ENCODE measurements at regions of chrX and their contacts with region 1.

Region 1: GRCh38 chrX:111869639-111870034 is 6.3 kb upstream of the TRPC5OS start:
- DNase-seq: peak in 2 of 5 donors; percentile 9 to 16
- ATAC-seq: peak in 3 of 4 donors; percentile 68 to 86 (median 82)
- H3K4me3 ChIP-seq: no peak overlapping the region
- H3K27ac ChIP-seq: no peak overlapping the region
- H3K4me1 ChIP-seq: peaks cover 0 to 7% (median 0%) of the 10 kb centered on the region in 12 donors
- H3K27me3 ChIP-seq: peaks cover 0 to 47% (median 0%) of the 10 kb centered on the region in 9 donors
- CTCF ChIP-seq: peak; percentile 35 to 76 (median 62)
- POLR2A ChIP-seq: no peak

Region 2: DNA sequence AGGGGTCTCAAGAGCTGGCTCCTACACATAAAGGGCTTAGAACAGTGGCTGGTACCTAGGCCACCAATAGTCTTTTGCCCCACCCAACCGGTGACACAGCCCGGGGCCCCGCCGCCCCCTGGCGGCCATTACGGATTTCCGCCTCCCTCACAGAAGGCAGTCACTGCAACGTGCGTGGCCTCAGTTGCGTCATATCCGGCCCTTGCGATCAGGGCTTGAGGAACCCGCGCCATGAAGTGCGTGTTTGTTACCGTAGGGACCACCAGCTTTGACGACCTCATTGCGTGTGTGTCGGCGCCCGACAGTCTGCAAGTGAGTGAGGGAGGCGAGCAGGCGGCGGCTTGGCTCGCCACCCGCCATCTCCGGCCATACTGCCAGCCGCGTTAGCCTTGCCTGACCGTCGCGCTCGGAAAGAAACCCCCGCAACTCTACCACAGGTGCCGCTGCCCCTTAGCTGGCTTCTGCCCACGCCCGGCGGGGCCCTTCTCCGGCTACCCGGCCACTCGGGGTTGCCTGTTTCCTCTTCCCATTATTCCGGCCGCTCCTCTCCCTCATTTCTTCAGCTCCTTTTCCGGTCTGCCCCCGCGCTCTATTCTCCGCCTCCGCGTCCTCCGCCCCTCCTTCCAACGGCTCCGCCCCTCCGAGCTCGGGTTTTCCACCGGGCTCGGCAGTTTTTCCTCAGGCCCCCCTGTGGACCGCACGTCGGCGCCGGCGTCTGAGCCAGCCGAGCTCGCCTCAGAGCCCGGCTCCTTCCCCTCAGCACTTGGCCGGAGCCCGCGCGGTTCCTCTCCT is 188.5 kb before region 1 on chrX and contains the start of gene ALG13:
- intact Hi-C with region 1: no loop called
- DNase-seq: peak; percentile 88 to 92 (median 92)
- ATAC-seq: peak; percentile 95 to 97 (median 96)
- H3K4me3 ChIP-seq: peak within 1 kb of the TSS; percentile 49 to 93 (median 75)
- H3K27ac ChIP-seq: peak within 1 kb of the TSS; percentile 93 to 100 (median 98)
- H3K4me1 ChIP-seq: peaks cover 0 to 16% (median 2%) of the 10 kb centered on the region in 12 donors
- H3K27me3 ChIP-seq: peaks cover 0 to 6% (median 0%) of the 10 kb centered on the region in 9 donors
- CTCF ChIP-seq: peak; percentile 49 to 82 (median 68)
- POLR2A ChIP-seq: peak in 1 of 2 donors; percentile 42
- total RNA-seq, gene ALG13: 20.5 to 39.7 (median 25.3) TPM

Region 3: GRCh38 chrX:112043997-112044396 is 174.4 kb after region 1 on chrX:
- intact Hi-C with region 1: loop called in 2 of 10 experiments (anchors 5 to 10 kb)
- DNase-seq: no peak
- ATAC-seq: no peak
- H3K4me3 ChIP-seq: no peak overlapping the region
- H3K27ac ChIP-seq: no peak overlapping the region
- H3K4me1 ChIP-seq: no peaks in the 10 kb centered on the region
- H3K27me3 ChIP-seq: peaks cover 0 to 38% (median 0%) of the 10 kb centered on the region in 9 donors
- CTCF ChIP-seq: peak in 4 of 12 donors; percentile 8 to 22 (median 14)
- POLR2A ChIP-seq: no peak

Region 4: DNA sequence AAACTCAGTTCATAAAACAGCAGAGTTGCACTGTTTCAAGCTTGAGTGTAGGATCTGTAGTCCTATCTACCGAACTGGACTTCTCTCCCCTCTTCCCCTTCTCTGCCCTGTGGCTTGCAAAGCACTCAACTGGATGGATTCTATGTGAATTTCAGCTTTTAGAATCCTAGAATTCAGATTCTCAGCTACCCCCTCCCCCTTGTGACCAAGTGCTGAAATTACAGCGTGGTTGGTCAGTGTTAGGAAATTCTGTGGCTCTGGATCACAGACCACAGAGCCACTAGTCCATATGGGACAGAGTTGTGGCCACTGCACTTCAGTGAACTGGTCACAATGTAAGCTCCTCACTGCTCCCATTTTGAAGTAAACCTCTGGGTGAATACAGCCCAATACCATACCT is 277.6 kb after region 1 on chrX:
- intact Hi-C with region 1: loop called in 5 of 10 experiments (anchors 5 to 10 kb)
- DNase-seq: no peak
- ATAC-seq: no peak
- H3K4me3 ChIP-seq: no peak overlapping the region
- H3K27ac ChIP-seq: no peak overlapping the region
- H3K4me1 ChIP-seq: no peaks in the 10 kb centered on the region
- H3K27me3 ChIP-seq: peaks cover 0 to 28% (median 0%) of the 10 kb centered on the region in 9 donors
- CTCF ChIP-seq: peak in 7 of 12 donors; percentile 14 to 38 (median 33)
- POLR2A ChIP-seq: no peak

Region 5: DNA sequence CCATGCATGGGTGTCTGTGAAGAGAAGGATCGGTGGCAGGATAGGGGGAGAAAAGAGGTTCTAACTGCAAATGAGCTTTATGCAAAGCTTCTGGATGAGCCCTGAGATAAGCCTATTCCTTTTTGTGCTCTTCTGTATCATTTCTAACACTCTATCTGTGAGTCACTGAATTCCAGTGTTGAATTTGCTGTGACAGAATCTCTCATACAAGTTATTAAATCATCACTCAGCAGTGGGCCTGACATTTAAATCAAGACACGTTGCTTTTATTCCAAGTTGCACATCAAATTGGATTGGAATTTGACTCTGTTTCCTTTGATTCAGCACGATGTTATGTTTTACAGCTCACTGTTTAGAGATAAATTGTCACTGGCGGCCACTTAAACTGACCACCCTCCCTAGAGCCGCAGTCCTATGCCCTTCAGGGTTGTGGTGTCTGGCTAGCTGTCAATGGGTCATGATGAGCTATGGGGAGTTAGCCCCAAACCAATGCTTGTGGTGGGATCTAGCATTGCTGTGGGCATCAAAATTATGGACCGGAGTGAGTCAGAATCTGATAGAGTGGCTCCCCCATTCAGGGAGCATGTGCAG is 767.4 kb after region 1 on chrX:
- intact Hi-C with region 1: loop called in 8 of 10 experiments (anchors 1 to 10 kb)
- DNase-seq: no peak
- ATAC-seq: no peak
- H3K4me3 ChIP-seq: no peak overlapping the region
- H3K27ac ChIP-seq: no peak overlapping the region
- H3K4me1 ChIP-seq: no peaks in the 10 kb centered on the region
- H3K27me3 ChIP-seq: peaks cover 0 to 11% (median 0%) of the 10 kb centered on the region in 9 donors
- CTCF ChIP-seq: no peak
- POLR2A ChIP-seq: no peak

Region 6: DNA sequence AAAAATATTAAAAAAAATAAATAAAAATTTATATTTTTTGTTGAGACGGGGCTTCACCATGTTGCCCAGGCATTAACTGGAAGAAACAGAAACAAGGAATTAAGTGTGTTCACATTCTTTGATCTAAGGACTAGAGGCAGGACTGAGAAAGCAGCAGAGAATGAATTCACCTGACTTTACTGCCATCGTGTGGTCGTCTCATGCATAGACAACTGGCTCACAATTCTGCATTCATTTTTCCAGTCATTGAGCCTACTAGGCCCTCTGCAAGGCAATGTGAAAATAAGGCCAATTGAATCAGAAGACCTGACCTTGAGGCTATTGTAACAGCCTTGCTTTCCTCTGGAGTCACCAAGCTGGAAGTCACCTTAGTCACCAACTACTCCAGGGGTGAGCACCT is 772.7 kb after region 1 on chrX:
- intact Hi-C with region 1: loop called in 8 of 10 experiments (anchors 1 to 10 kb)
- DNase-seq: peak in 1 of 5 donors; percentile 26
- ATAC-seq: peak in 3 of 4 donors; percentile 47 to 81 (median 77)
- H3K4me3 ChIP-seq: no peak overlapping the region
- H3K27ac ChIP-seq: no peak overlapping the region
- H3K4me1 ChIP-seq: no peaks in the 10 kb centered on the region
- H3K27me3 ChIP-seq: peaks cover 0 to 10% (median 0%) of the 10 kb centered on the region in 9 donors
- CTCF ChIP-seq: peak; percentile 37 to 72 (median 60)
- POLR2A ChIP-seq: no peak

Measured in heart left ventricle (tissue), 16 donors.